CD14-positive monocyte (primary cell): ENCODE measurements at regions of chr3 and their contacts with region 1.

Region 1: DNA sequence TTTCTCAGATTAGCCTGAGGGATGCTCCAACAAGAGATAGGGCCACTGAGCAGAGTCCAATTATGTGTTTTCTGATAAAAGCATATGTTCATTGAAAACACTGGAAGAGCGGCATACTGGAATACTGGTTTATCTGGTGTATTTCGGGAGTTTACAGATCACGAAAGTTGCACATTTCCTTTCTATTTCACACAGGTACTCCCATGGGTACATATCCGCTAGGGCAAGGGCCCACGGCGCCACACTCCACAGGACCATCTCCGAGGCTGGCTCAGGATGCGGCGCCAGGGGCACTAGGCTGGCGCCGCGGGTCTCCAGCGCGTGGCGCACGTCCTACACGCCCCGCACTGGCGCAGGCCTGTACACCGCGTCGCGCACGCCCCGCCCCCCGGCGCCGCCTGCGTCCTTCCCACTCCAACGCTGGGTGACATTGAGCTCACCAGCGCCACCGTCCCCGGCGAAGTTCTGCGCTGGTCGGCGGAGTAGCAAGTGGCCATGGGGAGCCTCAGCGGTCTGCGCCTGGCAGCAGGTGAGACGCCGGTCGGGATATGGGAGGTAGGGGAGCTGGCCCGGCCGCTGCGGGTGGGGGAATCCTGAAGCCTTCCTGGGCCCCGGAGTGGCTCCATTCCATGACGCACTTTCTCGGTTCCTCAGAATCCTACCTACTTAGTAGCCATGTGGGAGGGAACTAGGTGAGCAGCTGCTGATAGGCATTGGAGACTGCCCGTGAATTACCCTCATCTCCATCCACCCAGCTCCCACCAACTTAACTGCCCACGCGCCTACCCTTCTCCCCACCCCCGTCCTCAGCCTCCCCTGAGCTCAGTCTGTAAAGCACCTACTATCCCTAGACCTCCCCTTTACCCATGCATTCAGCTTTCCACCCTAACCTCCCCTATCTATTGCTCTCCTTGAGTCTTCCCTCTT is at the start of gene FAM162A:
- DNase-seq: peak; percentile 86 to 93 (median 90)
- H3K4me3 ChIP-seq: peak within 1 kb of the TSS; percentile 60 to 84 (median 68)
- H3K4me3 Mint-ChIP-seq: peak within 1 kb of the TSS; percentile 88 to 91
- H3K27ac ChIP-seq: peak within 1 kb of the TSS; percentile 85 to 86
- H3K27ac Mint-ChIP-seq: peak within 1 kb of the TSS; percentile 83 to 93 (median 92)
- H3K4me1 ChIP-seq: peaks cover 28 to 33% of the 10 kb centered on the region in 2 donors
- H3K4me1 Mint-ChIP-seq: peaks cover 24% of the 10 kb centered on the region
- H3K27me3 ChIP-seq: no peaks in the 10 kb centered on the region
- H3K27me3 Mint-ChIP-seq: peaks cover 0 to 2% (median 0%) of the 10 kb centered on the region in 3 donors
- CTCF ChIP-seq: peak; percentile 70
- polyA plus RNA-seq, gene FAM162A: 6.8 to 28.5 (median 24.2) TPM

Region 2: GRCh38 chr3:122415720-122416654 is 32.0 kb after region 1 on chr3 and contains the start of gene WDR5B:
- intact Hi-C with region 1: loop called in 1 of 2 experiments (anchors 5 kb)
- DNase-seq: peak; percentile 95 to 97 (median 96)
- H3K4me3 ChIP-seq: peak within 1 kb of the TSS; percentile 73 to 97 (median 94)
- H3K4me3 Mint-ChIP-seq: peak within 1 kb of the TSS; percentile 93 to 95
- H3K27ac ChIP-seq: peak within 1 kb of the TSS; percentile 79 to 92
- H3K27ac Mint-ChIP-seq: peak within 1 kb of the TSS; percentile 94 to 98 (median 95)
- H3K4me1 ChIP-seq: peaks cover 16 to 25% of the 10 kb centered on the region in 2 donors
- H3K4me1 Mint-ChIP-seq: peaks cover 33% of the 10 kb centered on the region
- H3K27me3 ChIP-seq: no peaks in the 10 kb centered on the region
- H3K27me3 Mint-ChIP-seq: no peaks in the 10 kb centered on the region
- CTCF ChIP-seq: no peak
- polyA plus RNA-seq, gene WDR5B: 0.85 to 3.1 (median 0.85) TPM

Region 3: GRCh38 chr3:122449451-122449850 is 65.4 kb after region 1 on chr3:
- intact Hi-C with region 1: no loop called
- DNase-seq: no peak
- H3K4me3 ChIP-seq: no peak overlapping the region
- H3K4me3 Mint-ChIP-seq: no peak overlapping the region
- H3K27ac ChIP-seq: no peak overlapping the region
- H3K27ac Mint-ChIP-seq: peak overlapping the region in 1 of 7 donors; percentile 10
- H3K4me1 ChIP-seq: no peaks in the 10 kb centered on the region
- H3K4me1 Mint-ChIP-seq: peaks cover 8% of the 10 kb centered on the region
- H3K27me3 ChIP-seq: no peaks in the 10 kb centered on the region
- H3K27me3 Mint-ChIP-seq: no peaks in the 10 kb centered on the region
- CTCF ChIP-seq: no peak

Region 4: DNA sequence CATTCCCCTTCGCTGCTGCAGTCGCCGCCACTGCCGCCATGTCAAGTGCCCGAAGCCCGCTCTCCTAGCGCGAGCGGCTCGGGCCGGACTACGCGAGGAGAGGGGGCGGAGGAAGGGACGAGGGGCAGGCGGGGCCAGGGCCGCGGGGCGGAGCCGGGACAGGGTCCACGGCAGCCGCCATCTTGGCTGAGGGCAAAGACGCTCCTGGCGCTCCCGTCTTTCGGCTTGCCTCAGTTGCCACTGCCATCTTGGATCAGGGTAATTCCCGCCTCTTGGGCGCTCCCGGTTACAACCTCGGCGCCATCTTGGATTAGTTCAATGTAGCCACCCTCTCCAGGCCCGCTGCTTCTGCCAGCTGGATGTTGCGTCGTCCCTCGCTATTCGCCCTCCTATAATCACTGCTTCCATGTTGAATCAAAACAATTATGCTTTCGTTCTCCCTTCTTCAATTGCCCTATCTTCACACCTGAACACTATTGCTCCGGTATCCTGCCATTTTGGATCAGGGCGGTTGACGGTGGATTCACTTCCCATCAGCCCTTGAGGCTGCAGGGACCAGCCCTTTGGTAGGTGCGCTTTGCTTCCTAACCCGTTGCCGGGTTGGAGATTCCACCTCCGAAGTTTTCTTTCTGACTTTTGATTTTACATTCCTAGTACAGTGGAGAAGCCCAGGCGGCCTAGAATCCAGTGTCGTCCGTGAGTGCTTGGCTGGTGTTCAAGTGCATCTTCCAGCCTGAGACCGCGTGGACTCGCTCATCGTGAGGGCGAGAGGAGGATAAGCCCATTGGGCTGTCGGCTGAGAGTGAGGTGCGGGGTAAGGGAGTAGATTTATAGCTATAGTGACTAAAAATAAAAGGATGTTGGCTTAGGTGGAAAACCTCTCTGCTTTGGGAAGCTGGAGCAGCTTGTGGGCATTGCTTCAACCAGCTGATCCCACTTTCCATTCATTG is 1201.2 kb after region 1 on chr3 and contains the start of gene HACD2:
- intact Hi-C with region 1: loop called in 1 of 2 experiments (anchors 10 kb)
- DNase-seq: peak; percentile 94 to 98 (median 95)
- H3K4me3 ChIP-seq: peak within 1 kb of the TSS; percentile 79 to 98 (median 95)
- H3K4me3 Mint-ChIP-seq: no peak within 1 kb of the TSS
- H3K27ac ChIP-seq: peak within 1 kb of the TSS; percentile 70 to 94
- H3K27ac Mint-ChIP-seq: peak within 1 kb of the TSS in 6 of 7 donors; percentile 24 to 82 (median 64)
- H3K4me1 ChIP-seq: peaks cover 13 to 23% of the 10 kb centered on the region in 2 donors
- H3K4me1 Mint-ChIP-seq: peaks cover 19% of the 10 kb centered on the region
- H3K27me3 ChIP-seq: no peaks in the 10 kb centered on the region
- H3K27me3 Mint-ChIP-seq: peaks cover 0 to 1% (median 0%) of the 10 kb centered on the region in 3 donors
- CTCF ChIP-seq: no peak
- polyA plus RNA-seq, gene HACD2: 12.9 to 17.1 (median 15.1) TPM